IMR-90 (cell line): ENCODE measurements at regions of chr3 and their contacts with region 1.

Region 1: GRCh38 chr3:46208167-46208704 is at the start of gene CCR1:
- DNase-seq: peak; percentile 10
- ATAC-seq: peak; percentile 51; the same call in 1 of the 2 replicates
- H3K4me3 ChIP-seq: no peak within 1 kb of the TSS
- H3K27ac ChIP-seq: no peak within 1 kb of the TSS
- H3K4me1 ChIP-seq: peaks cover 6% of the 10 kb centered on the region; the same call in 1 of the 2 replicates
- H3K27me3 ChIP-seq: peaks cover 17% of the 10 kb centered on the region
- CTCF ChIP-seq: peak; percentile 35
- POLR2A ChIP-seq: no peak
- RAD21 ChIP-seq: peak; percentile 36
- total RNA-seq, gene CCR1: not detected in 2 replicates

Region 2: GRCh38 chr3:45906681-45907407 is 301.4 kb before region 1 on chr3:
- CTCF ChIA-PET with region 1: no interaction called
- POLR2A ChIA-PET with region 1: no interaction called
- dilution Hi-C with region 1: no loop called
- in situ Hi-C with region 1: no loop called
- intact Hi-C with region 1: no loop called
- DNase-seq: peak; percentile 84
- ATAC-seq: peak; percentile 84
- H3K4me3 ChIP-seq: no peak overlapping the region
- H3K27ac ChIP-seq: no peak overlapping the region
- H3K4me1 ChIP-seq: peaks cover 19% of the 10 kb centered on the region
- H3K27me3 ChIP-seq: no peaks in the 10 kb centered on the region
- CTCF ChIP-seq: peak; percentile 63
- POLR2A ChIP-seq: no peak
- RAD21 ChIP-seq: peak; percentile 72

Region 3: DNA sequence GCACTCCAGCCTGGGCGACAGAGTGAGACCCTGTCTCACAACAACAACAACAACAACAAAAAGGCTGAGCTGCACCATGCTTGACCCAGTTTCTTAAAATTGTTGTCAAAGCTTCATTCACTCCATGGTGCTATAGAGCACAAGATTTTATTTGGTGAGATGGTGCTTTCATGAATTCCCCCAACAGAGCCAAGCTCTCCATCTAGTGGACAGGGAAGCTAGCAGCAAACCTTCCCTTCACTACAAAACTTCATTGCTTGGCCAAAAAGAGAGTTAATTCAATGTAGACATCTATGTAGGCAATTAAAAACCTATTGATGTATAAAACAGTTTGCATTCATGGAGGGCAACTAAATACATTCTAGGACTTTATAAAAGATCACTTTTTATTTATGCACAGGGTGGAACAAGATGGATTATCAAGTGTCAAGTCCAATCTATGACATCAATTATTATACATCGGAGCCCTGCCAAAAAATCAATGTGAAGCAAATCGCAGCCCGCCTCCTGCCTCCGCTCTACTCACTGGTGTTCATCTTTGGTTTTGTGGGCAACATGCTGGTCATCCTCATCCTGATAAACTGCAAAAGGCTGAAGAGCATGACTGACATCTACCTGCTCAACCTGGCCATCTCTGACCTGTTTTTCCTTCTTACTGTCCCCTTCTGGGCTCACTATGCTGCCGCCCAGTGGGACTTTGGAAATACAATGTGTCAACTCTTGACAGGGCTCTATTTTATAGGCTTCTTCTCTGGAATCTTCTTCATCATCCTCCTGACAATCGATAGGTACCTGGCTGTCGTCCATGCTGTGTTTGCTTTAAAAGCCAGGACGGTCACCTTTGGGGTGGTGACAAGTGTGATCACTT is 164.5 kb after region 1 on chr3:
- CTCF ChIA-PET with region 1: interaction called, 4 read pairs
- POLR2A ChIA-PET with region 1: no interaction called
- dilution Hi-C with region 1: no loop called
- in situ Hi-C with region 1: no loop called
- intact Hi-C with region 1: loop called (anchors 5 kb)
- DNase-seq: peak; percentile 29
- ATAC-seq: peak; percentile 74
- H3K4me3 ChIP-seq: no peak overlapping the region
- H3K27ac ChIP-seq: no peak overlapping the region
- H3K4me1 ChIP-seq: no peaks in the 10 kb centered on the region
- H3K27me3 ChIP-seq: peaks cover 54% of the 10 kb centered on the region
- CTCF ChIP-seq: peak; percentile 61
- POLR2A ChIP-seq: no peak
- RAD21 ChIP-seq: peak; percentile 58

Region 4: DNA sequence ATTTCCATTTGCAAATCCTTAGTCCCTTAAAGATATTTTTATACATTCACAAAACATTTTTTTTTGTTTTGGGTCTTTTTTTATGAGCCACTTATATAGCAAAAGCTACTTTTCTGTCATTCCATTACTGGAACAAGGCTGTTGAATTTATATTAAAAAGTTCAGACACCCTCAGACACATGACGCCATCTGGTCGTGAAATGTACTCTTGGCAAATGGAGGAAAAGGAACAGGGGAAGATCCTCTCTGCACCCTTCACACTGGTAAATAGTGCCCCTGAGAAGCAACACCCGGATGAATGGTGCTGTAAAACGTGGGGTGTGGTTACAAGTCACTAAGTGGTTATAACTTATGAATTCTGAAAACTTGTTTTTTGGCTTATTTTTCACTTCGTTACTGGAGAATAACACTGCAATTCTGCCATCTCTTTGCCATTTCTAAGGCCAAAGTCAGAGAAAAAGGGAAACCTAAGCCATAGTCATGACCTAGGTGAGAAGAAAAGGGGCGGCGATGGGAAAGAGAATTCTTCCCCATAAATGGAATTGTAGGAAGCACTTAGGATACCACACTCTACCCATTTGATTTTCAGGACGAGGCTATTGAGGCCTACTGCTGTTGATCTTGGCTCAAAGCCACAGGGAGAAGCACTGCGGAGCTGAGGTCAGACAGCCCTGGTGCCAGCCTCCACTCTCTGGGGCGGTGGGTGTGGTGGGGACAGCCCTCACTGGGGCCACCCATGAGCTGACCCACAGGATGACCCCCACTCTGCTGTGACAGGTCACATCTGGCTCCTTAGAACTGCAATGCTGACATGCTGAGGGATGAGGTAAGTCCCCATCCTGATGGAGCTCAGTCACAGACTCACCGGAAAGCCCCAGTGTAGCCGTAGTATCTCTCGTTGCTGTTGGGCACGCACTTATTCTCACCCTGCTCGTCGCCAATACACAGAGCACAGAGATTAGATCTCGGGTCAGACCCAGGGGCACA is 234.6 kb after region 1 on chr3:
- CTCF ChIA-PET with region 1: no interaction called
- POLR2A ChIA-PET with region 1: no interaction called
- dilution Hi-C with region 1: no loop called
- in situ Hi-C with region 1: no loop called
- intact Hi-C with region 1: no loop called
- DNase-seq: no peak
- ATAC-seq: no peak
- H3K4me3 ChIP-seq: no peak overlapping the region
- H3K27ac ChIP-seq: no peak overlapping the region
- H3K4me1 ChIP-seq: no peaks in the 10 kb centered on the region
- H3K27me3 ChIP-seq: peaks cover 65% of the 10 kb centered on the region
- CTCF ChIP-seq: no peak
- POLR2A ChIP-seq: no peak
- RAD21 ChIP-seq: no peak